ENCODE measurements at regions of chr1 and their contacts with region 1.

Region 1: DNA sequence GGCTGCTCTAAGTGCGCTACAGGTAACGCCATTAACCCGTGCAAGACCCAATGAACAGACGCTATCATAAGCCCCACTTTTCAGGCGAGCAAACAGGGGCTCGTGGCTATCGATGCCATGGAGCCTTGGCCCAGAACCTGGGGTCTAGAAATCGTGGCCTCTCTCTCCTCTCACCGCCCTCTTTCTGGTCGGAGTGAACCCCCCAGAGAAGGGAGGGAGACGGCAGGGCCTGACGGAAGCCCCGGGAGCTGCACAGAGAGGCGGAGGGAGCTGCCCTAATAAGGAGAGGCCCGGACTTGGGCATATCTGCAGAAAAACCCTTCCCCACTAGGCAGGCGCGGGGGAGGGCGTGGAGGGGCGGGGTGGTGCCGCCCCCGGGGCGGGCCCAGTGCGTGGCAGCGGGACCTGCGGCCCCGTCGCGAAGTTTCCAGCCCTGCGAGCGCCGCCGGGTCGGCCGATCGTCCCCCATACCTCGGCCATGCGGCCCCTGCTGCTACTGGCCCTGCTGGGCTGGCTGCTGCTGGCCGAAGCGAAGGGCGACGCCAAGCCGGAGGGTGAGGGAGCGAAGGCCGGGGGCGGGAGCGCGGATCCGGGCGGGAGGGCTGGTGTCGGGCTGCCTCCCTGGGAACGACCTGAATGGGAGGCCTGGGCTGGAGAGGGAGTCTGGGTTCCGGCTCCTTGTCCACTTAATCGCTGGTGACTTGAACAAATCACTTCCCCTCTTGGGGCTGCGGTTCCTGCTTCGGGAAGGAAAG is at the start of gene PLOD1:
- DNase-seq: peak; percentile 88
- ATAC-seq: peak; percentile 98
- H3K4me3 Mint-ChIP-seq: peak within 1 kb of the TSS; percentile 75
- H3K27ac Mint-ChIP-seq: no peak within 1 kb of the TSS
- H3K4me1 Mint-ChIP-seq: peaks cover 4% of the 10 kb centered on the region
- H3K27me3 Mint-ChIP-seq: no peaks in the 10 kb centered on the region
- total RNA-seq, gene PLOD1: 11.7 to 11.9 TPM

Region 2: GRCh38 chr1:11838349-11839272 is 95.9 kb before region 1 on chr1:
- CTCF ChIA-PET with region 1: no interaction called
- POLR2A ChIA-PET with region 1: no interaction called
- intact Hi-C with region 1: no loop called
- DNase-seq: peak; percentile 86
- ATAC-seq: peak; percentile 98
- H3K4me3 Mint-ChIP-seq: no peak overlapping the region
- H3K27ac Mint-ChIP-seq: no peak overlapping the region
- H3K4me1 Mint-ChIP-seq: no peaks in the 10 kb centered on the region
- H3K27me3 Mint-ChIP-seq: no peaks in the 10 kb centered on the region

Region 3: GRCh38 chr1:11979851-11980675 is 45.6 kb after region 1 on chr1 and contains the start of gene MFN2:
- CTCF ChIA-PET with region 1: no interaction called
- POLR2A ChIA-PET with region 1: no interaction called
- intact Hi-C with region 1: loop called (anchors 1 to 2 kb)
- DNase-seq: peak; percentile 96
- ATAC-seq: peak; percentile 93
- H3K4me3 Mint-ChIP-seq: peak within 1 kb of the TSS; percentile 97
- H3K27ac Mint-ChIP-seq: peak within 1 kb of the TSS; percentile 94
- H3K4me1 Mint-ChIP-seq: peaks cover 36% of the 10 kb centered on the region
- H3K27me3 Mint-ChIP-seq: no peaks in the 10 kb centered on the region
- total RNA-seq, gene MFN2: 52.5 to 71.6 TPM

Region 4: GRCh38 chr1:12078938-12079861 is 144.7 kb after region 1 on chr1:
- CTCF ChIA-PET with region 1: no interaction called
- POLR2A ChIA-PET with region 1: no interaction called
- intact Hi-C with region 1: loop called in 1 of 2 experiments (anchors 5 kb)
- DNase-seq: peak; percentile 77
- ATAC-seq: peak; percentile 79
- H3K4me3 Mint-ChIP-seq: no peak overlapping the region
- H3K27ac Mint-ChIP-seq: peak overlapping the region; percentile 67
- H3K4me1 Mint-ChIP-seq: peaks cover 24% of the 10 kb centered on the region
- H3K27me3 Mint-ChIP-seq: peaks cover 5% of the 10 kb centered on the region

Measured in activated CD4-positive, alpha-beta T cell treated with anti-CD3 and anti-CD28 coated beads for 36 hours (primary cell).